Left lung (tissue), 14 donors: ENCODE measurements at regions of chr12 and their contacts with region 1.

Region 1: GRCh38 chr12:78470354-78471195 is 394.0 kb upstream of the SYT1 start:
- DNase-seq: peak in 1 of 4 donors; percentile 23
- ATAC-seq: peak; percentile 70
- H3K4me3 ChIP-seq: no peak overlapping the region
- H3K27ac ChIP-seq: no peak overlapping the region
- H3K4me1 ChIP-seq: no peaks in the 10 kb centered on the region
- H3K27me3 ChIP-seq: no peaks in the 10 kb centered on the region
- CTCF ChIP-seq: peak; percentile 19 to 32

Region 2: GRCh38 chr12:79373896-79374499 is 903.4 kb after region 1 on chr12:
- intact Hi-C with region 1: loop called in 1 of 2 experiments (anchors 10 kb)
- DNase-seq: peak in 1 of 4 donors; percentile 17
- ATAC-seq: peak; percentile 67
- H3K4me3 ChIP-seq: no peak overlapping the region
- H3K27ac ChIP-seq: no peak overlapping the region
- H3K4me1 ChIP-seq: no peaks in the 10 kb centered on the region
- H3K27me3 ChIP-seq: no peaks in the 10 kb centered on the region
- CTCF ChIP-seq: peak; percentile 46 to 58